ENCODE measurements at regions of chr20 and their contacts with region 1.

Region 1: DNA sequence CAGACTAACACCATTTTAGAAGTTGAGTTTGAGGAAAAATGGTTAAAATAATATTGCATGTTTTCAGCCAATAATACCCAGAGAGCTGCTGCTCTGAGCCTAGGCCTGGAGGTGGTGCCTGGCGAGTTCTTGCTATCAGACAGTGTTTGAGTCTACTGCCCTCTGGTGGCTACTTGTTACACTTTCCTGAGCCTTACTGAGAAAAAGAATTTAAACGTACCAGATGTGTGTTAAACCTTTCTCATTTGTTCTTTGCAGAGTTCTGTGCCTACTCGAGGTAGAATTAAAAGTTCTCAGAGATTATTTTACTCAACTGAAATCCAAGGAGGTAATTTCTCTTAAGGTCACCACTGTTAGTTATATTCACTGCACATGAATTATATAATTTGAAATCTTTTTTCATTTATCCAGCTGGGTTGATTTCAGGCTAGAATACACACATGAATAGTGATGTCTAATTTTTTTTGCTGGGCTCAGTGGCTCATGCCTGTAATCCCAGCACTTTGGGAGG is 38.2 kb downstream of the SHLD1 start:
- DNase-seq: peak; percentile 73
- H3K4me3 ChIP-seq: no peak overlapping the region
- H3K27ac ChIP-seq: no peak overlapping the region
- H3K4me1 ChIP-seq: peaks cover 7% of the 10 kb centered on the region
- H3K27me3 ChIP-seq: no peaks in the 10 kb centered on the region
- CTCF ChIP-seq: peak; percentile 77 to 89 (median 77)

Region 2: GRCh38 chr20:5364997-5365597 is 423.3 kb before region 1 on chr20:
- dilution Hi-C with region 1: no loop called
- DNase-seq: no peak
- H3K4me3 ChIP-seq: peak overlapping the region in 1 of 3 experiments; percentile 44
- H3K27ac ChIP-seq: no peak overlapping the region
- H3K4me1 ChIP-seq: peaks cover 6% of the 10 kb centered on the region
- H3K27me3 ChIP-seq: no peaks in the 10 kb centered on the region
- CTCF ChIP-seq: no peak

Region 3: GRCh38 chr20:5480824-5481600 is 307.4 kb before region 1 on chr20:
- dilution Hi-C with region 1: no loop called
- DNase-seq: no peak
- H3K4me3 ChIP-seq: no peak overlapping the region
- H3K27ac ChIP-seq: no peak overlapping the region
- H3K4me1 ChIP-seq: no peaks in the 10 kb centered on the region
- H3K27me3 ChIP-seq: peaks cover 9% of the 10 kb centered on the region
- CTCF ChIP-seq: no peak

Region 4: GRCh38 chr20:5557123-5557522 is 231.3 kb before region 1 on chr20:
- dilution Hi-C with region 1: loop called (anchors 25 kb)
- DNase-seq: peak; percentile 2
- H3K4me3 ChIP-seq: no peak overlapping the region
- H3K27ac ChIP-seq: no peak overlapping the region
- H3K4me1 ChIP-seq: no peaks in the 10 kb centered on the region
- H3K27me3 ChIP-seq: no peaks in the 10 kb centered on the region
- CTCF ChIP-seq: peak; percentile 50 to 80 (median 58)

Region 5: DNA sequence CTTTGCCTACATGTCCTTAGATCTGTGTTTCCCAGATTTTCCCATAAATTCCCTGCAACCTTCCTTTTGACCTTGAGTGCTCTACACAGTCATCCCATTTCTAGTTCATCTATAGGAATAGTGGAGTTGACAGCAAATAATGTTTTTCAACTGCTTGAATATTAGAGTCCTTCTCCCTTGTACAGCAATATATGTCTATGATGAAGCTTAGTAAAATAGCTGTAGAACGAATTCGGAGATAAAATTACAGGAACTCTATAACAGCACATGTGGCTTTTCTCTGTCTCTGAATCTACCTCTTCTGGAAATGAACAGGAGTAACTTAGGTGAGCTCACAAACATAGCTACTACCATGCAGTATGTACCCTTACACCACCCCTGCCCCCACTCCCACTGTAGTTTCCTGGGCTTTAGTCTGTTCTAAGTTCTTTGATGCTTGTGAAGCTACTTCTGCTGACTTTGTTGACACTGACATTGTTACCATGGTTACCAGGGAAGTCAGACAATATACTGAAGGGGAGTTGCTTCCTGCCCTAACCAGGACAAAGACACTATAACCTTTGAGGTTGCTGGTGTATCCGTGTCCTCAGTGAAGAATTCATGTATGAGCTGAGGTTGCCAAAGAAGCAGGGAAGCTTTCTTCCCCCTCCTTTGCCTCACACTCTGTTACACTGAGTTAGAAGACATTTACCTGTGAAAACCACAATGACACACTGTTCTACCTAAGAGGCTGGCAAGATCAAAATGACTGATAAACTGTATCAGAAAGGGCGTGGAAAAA is 74.0 kb before region 1 on chr20:
- dilution Hi-C with region 1: no loop called
- DNase-seq: peak; percentile 26
- H3K4me3 ChIP-seq: no peak overlapping the region
- H3K27ac ChIP-seq: no peak overlapping the region
- H3K4me1 ChIP-seq: peaks cover 6% of the 10 kb centered on the region
- H3K27me3 ChIP-seq: peaks cover 4% of the 10 kb centered on the region
- CTCF ChIP-seq: no peak